Activated T-helper 1 cell treated with anti-CD3 and anti-CD28 coated beads, Interleukin-12 subunit alpha, Interleukin-12 subunit beta, Interleukin-2, Interleukin-4 antibody, amounts not matched to agents 30 ng/mL and 10 ng/mL and 1 ng/mL, durations not matched to agents 14 hours and 24 hours and 36 hours (primary cell): ENCODE measurements at regions of chr6 and their contacts with region 1.

Region 1: GRCh38 chr6:141464490-141464889 is 668.2 kb upstream of the GJE1 start:
- DNase-seq: no peak
- H3K4me3 Mint-ChIP-seq: no peak overlapping the region
- H3K27ac Mint-ChIP-seq: no peak overlapping the region
- H3K4me1 Mint-ChIP-seq: peaks cover 14% of the 10 kb centered on the region
- H3K27me3 Mint-ChIP-seq: no peaks in the 10 kb centered on the region

Region 2: DNA sequence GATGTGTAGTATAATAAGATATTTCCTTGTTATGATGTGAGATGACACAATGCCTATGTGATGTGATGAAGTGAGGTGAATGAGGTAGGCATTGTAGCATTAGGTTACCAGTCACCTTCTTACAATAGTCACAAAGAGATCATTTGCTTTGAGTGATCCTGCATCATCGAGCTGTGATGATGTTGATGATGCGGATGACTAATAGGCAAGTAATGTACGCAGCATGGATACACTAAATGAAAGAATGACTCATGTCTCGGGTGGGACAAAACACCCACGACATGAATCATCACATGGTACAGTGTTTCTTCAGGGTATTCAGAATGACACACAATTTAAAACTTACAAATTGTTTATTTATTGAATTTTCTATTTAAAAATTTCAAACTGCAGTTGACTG is 138.1 kb before region 1 on chr6:
- intact Hi-C with region 1: loop called (anchors 5 kb)
- DNase-seq: no peak
- H3K4me3 Mint-ChIP-seq: no peak overlapping the region
- H3K27ac Mint-ChIP-seq: no peak overlapping the region
- H3K4me1 Mint-ChIP-seq: peaks cover 11% of the 10 kb centered on the region
- H3K27me3 Mint-ChIP-seq: no peaks in the 10 kb centered on the region

Region 3: GRCh38 chr6:141403795-141404194 is 60.7 kb before region 1 on chr6:
- intact Hi-C with region 1: no loop called
- DNase-seq: no peak
- H3K4me3 Mint-ChIP-seq: no peak overlapping the region
- H3K27ac Mint-ChIP-seq: no peak overlapping the region
- H3K4me1 Mint-ChIP-seq: peaks cover 8% of the 10 kb centered on the region
- H3K27me3 Mint-ChIP-seq: no peaks in the 10 kb centered on the region

Region 4: DNA sequence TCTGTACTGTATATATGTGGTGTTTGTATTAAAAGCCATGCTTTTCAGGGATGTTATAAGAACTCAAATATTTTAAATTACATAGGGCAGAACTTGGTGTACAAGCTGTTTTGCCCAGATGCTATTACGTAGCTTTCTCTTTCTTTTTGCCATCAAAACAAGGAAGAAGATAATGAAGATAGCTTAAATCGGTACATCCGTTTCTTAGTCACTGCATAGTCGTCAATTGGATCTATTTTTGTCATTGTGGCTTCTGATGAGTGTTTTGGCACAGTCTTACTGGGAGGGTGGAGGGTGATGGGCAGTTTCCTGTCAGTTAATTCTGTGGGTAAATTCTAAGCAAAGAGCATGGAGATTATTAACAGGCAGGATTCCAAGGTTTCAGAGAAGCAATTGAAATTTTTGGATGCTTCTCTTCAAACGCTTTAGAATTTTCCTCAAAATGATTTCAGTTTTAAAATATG is 19.1 kb after region 1 on chr6:
- intact Hi-C with region 1: loop called (anchors 1 kb)
- DNase-seq: peak; percentile 51
- H3K4me3 Mint-ChIP-seq: peak overlapping the region; percentile 87
- H3K27ac Mint-ChIP-seq: peak overlapping the region; percentile 98
- H3K4me1 Mint-ChIP-seq: peaks cover 47% of the 10 kb centered on the region
- H3K27me3 Mint-ChIP-seq: no peaks in the 10 kb centered on the region

Region 5: DNA sequence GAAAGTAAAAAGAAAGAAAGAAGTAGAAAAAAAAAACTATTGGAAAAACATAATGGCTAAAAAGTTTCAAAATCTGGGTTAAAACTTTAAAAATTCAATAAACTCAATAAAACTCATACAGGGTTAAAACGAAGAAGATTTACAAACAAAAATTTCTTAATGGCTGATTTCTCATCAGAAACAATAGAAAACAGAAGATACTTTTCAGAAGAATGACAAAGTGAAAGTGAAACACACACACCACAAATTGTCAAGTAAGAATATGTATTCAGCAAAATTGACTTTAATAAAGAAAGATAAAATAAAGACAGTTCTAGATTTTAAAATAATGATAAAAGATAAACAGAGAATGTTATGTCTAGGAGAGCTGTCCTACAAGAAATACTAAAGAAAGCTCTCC is 49.3 kb after region 1 on chr6:
- intact Hi-C with region 1: loop called (anchors 10 kb)
- DNase-seq: no peak
- H3K4me3 Mint-ChIP-seq: no peak overlapping the region
- H3K27ac Mint-ChIP-seq: no peak overlapping the region
- H3K4me1 Mint-ChIP-seq: peaks cover 9% of the 10 kb centered on the region
- H3K27me3 Mint-ChIP-seq: no peaks in the 10 kb centered on the region

Region 6: GRCh38 chr6:141641406-141641805 is 176.9 kb after region 1 on chr6:
- intact Hi-C with region 1: no loop called
- DNase-seq: no peak
- H3K4me3 Mint-ChIP-seq: no peak overlapping the region
- H3K27ac Mint-ChIP-seq: no peak overlapping the region
- H3K4me1 Mint-ChIP-seq: no peaks in the 10 kb centered on the region
- H3K27me3 Mint-ChIP-seq: no peaks in the 10 kb centered on the region